IMR-90 (cell line): ENCODE measurements at regions of chr10 and their contacts with region 1.

Region 1: DNA sequence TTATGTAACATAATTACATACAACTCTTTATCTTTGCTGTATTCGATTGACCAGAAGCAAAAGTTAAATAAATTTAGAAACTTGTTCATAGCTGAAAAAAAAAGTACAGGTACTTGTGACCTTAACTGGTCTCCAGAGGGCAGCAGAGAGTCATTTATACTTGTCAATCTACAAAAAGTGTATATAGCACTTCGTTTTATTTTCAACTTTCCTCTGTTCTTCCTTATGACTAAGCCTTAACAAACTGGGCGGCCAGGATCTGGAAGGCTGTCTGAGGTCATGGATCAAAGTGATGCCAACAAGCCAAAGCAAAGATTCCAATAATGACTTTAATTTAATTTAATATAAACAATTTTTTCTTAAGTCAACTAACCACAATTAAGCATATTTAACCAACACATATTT is 29.8 kb downstream of the C10orf67 start:
- DNase-seq: peak; percentile 88
- ATAC-seq: peak; percentile 76
- H3K4me3 ChIP-seq: no peak overlapping the region
- H3K27ac ChIP-seq: no peak overlapping the region
- H3K4me1 ChIP-seq: peaks cover 6% of the 10 kb centered on the region; the same call in 1 of the 2 replicates
- H3K27me3 ChIP-seq: no peaks in the 10 kb centered on the region; the same call in 1 of the 2 replicates
- CTCF ChIP-seq: peak; percentile 80
- POLR2A ChIP-seq: no peak
- RAD21 ChIP-seq: peak; percentile 87

Region 2: DNA sequence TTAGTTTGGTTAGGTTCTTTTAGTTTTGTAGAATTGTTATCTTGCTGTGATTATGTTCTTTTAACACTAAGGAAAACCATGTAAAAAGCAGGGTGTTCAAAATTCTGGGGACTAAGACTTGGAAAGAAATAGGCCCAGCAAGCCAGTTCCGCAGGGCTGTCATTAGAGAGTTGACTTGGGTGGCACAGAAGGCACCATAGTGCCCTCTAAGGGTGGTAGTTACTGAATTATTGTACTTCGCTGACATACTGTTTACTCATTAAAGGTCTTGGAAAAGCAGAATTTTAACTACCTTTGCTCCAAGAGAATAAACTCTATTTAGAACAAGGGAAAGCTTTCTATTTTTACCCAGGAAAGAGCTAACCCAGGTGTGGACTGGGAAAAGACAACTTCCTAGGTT is 210.6 kb after region 1 on chr10:
- CTCF ChIA-PET with region 1: interaction called, 15 read pairs
- POLR2A ChIA-PET with region 1: no interaction called
- dilution Hi-C with region 1: no loop called
- in situ Hi-C with region 1: loop called (anchors 5 kb)
- intact Hi-C with region 1: loop called (anchors 1 kb)
- DNase-seq: peak; percentile 7
- ATAC-seq: peak; percentile 71
- H3K4me3 ChIP-seq: no peak overlapping the region
- H3K27ac ChIP-seq: no peak overlapping the region
- H3K4me1 ChIP-seq: no peaks in the 10 kb centered on the region
- H3K27me3 ChIP-seq: no peaks in the 10 kb centered on the region
- CTCF ChIP-seq: peak; percentile 39
- POLR2A ChIP-seq: no peak
- RAD21 ChIP-seq: peak; percentile 51

Region 3: DNA sequence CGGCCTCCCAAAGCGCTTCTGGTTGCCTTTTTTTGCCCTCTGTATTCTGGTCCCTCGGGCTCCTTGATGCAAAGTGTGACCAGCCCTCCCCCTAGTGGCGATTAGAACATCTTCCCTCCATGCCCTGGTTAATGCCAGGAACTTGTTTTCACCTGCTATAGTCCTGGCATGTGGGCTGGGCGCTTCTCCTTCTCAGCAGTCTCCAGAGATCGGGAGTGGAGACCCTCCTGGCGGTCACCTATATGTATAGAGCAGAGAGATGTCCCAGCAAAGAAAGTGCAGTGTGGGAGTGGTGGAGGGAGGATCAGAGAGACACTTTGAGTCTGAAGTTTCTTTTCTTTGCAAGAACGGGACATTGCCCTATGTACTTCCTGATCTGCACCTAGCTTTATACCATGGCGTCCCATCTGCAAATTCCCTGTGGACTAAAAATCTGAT is 388.2 kb after region 1 on chr10:
- CTCF ChIA-PET with region 1: interaction called, 5 read pairs
- POLR2A ChIA-PET with region 1: no interaction called
- dilution Hi-C with region 1: no loop called
- in situ Hi-C with region 1: loop called (anchors 10 kb)
- intact Hi-C with region 1: loop called (anchors 1 kb)
- DNase-seq: peak; percentile 52
- ATAC-seq: peak; percentile 94
- H3K4me3 ChIP-seq: no peak overlapping the region
- H3K27ac ChIP-seq: no peak overlapping the region
- H3K4me1 ChIP-seq: no peaks in the 10 kb centered on the region
- H3K27me3 ChIP-seq: no peaks in the 10 kb centered on the region
- CTCF ChIP-seq: peak; percentile 54
- POLR2A ChIP-seq: no peak
- RAD21 ChIP-seq: peak; percentile 66

Region 4: GRCh38 chr10:23793577-23793976 is 478.7 kb after region 1 on chr10:
- CTCF ChIA-PET with region 1: no interaction called
- POLR2A ChIA-PET with region 1: no interaction called
- dilution Hi-C with region 1: no loop called
- in situ Hi-C with region 1: no loop called
- intact Hi-C with region 1: no loop called
- DNase-seq: no peak
- ATAC-seq: no peak
- H3K4me3 ChIP-seq: no peak overlapping the region
- H3K27ac ChIP-seq: no peak overlapping the region
- H3K4me1 ChIP-seq: no peaks in the 10 kb centered on the region
- H3K27me3 ChIP-seq: no peaks in the 10 kb centered on the region
- CTCF ChIP-seq: no peak
- POLR2A ChIP-seq: no peak
- RAD21 ChIP-seq: no peak